ENCODE measurements at regions of chr14 and their contacts with region 1.

Region 1: GRCh38 chr14:104970231-104971101 is 7.7 kb downstream of the AHNAK2 start:
- DNase-seq: no peak
- ATAC-seq: peak; percentile 16
- H3K4me3 Mint-ChIP-seq: no peak overlapping the region
- H3K27ac Mint-ChIP-seq: no peak overlapping the region
- H3K4me1 Mint-ChIP-seq: peaks cover 6% of the 10 kb centered on the region
- H3K27me3 Mint-ChIP-seq: peaks cover 2% of the 10 kb centered on the region; the same call in 1 of the 2 replicates
- CTCF ChIP-seq: no peak

Region 2: GRCh38 chr14:104932676-104933631 is 37.5 kb before region 1 on chr14:
- CTCF ChIA-PET with region 1: interaction called, 20 read pairs
- POLR2A ChIA-PET with region 1: no interaction called
- DNase-seq: peak; percentile 87
- ATAC-seq: peak; percentile 77
- H3K4me3 Mint-ChIP-seq: peak overlapping the region; percentile 62
- H3K27ac Mint-ChIP-seq: no peak overlapping the region
- H3K4me1 Mint-ChIP-seq: no peaks in the 10 kb centered on the region
- H3K27me3 Mint-ChIP-seq: peaks cover 74% of the 10 kb centered on the region
- CTCF ChIP-seq: peak; percentile 58

Region 3: GRCh38 chr14:105337966-105338741 is 367.7 kb after region 1 on chr14:
- CTCF ChIA-PET with region 1: no interaction called
- POLR2A ChIA-PET with region 1: no interaction called
- DNase-seq: no peak
- ATAC-seq: no peak
- H3K4me3 Mint-ChIP-seq: no peak overlapping the region
- H3K27ac Mint-ChIP-seq: peak overlapping the region; percentile 60
- H3K4me1 Mint-ChIP-seq: peaks cover 9% of the 10 kb centered on the region
- H3K27me3 Mint-ChIP-seq: no peaks in the 10 kb centered on the region
- CTCF ChIP-seq: no peak